Left colon (tissue), 2 donors: ENCODE measurements at regions of chr7 and their contacts with region 1.

Region 1: GRCh38 chr7:125670926-125671572 is 741.4 kb upstream of the POT1 start:
- DNase-seq: no peak
- ATAC-seq: no peak

Region 2: GRCh38 chr7:125061776-125062397 is 609.2 kb before region 1 on chr7:
- intact Hi-C with region 1: loop called in 1 of 2 experiments (anchors 10 kb)
- DNase-seq: no peak
- ATAC-seq: no peak

Region 3: DNA sequence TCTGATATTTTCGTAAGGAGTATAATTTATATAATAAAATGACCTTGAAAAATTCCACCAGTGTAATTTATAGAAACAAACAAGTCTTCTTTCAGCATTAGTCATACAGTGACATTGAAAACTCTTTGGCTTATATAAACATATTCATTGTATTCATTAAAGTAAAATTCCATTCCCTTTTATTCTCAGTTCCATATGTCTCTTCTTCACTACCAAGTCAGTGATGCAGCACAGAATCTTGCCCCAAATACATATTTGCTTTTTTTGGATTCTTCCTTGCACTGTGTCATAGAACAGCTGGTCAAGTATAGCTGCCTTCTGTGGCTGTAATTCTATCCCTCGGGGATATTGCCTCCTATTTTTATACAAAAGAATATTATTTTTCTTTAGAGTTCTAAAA is 143.1 kb after region 1 on chr7:
- intact Hi-C with region 1: no loop called
- DNase-seq: no peak
- ATAC-seq: no peak